ENCODE measurements at regions of chr15 and their contacts with region 1.

Region 1: GRCh38 chr15:79596051-79596507 is 163.9 kb downstream of the MINAR1 start:
- DNase-seq: peak; percentile 81
- H3K4me3 ChIP-seq: no peak overlapping the region
- H3K27ac ChIP-seq: no peak overlapping the region
- H3K4me1 ChIP-seq: no peaks in the 10 kb centered on the region
- H3K27me3 ChIP-seq: peaks cover 3% of the 10 kb centered on the region
- CTCF ChIP-seq: peak; percentile 99

Region 2: GRCh38 chr15:79339564-79340314 is 256.3 kb before region 1 on chr15:
- CTCF ChIA-PET with region 1: interaction called, 12 read pairs
- dilution Hi-C with region 1: no loop called
- in situ Hi-C with region 1: loop called in 1 of 2 experiments (anchors 25 kb)
- intact Hi-C with region 1: loop called (anchors 1 kb)
- DNase-seq: peak; percentile 8
- H3K4me3 ChIP-seq: no peak overlapping the region
- H3K27ac ChIP-seq: no peak overlapping the region
- H3K4me1 ChIP-seq: no peaks in the 10 kb centered on the region
- H3K27me3 ChIP-seq: no peaks in the 10 kb centered on the region
- CTCF ChIP-seq: peak; percentile 92 to 95

Region 3: GRCh38 chr15:79450648-79451047 is 145.4 kb before region 1 on chr15:
- CTCF ChIA-PET with region 1: no interaction called
- dilution Hi-C with region 1: no loop called
- in situ Hi-C with region 1: no loop called
- intact Hi-C with region 1: loop called (anchors 1 kb)
- DNase-seq: no peak
- H3K4me3 ChIP-seq: no peak overlapping the region
- H3K27ac ChIP-seq: no peak overlapping the region
- H3K4me1 ChIP-seq: no peaks in the 10 kb centered on the region
- H3K27me3 ChIP-seq: no peaks in the 10 kb centered on the region
- CTCF ChIP-seq: peak in 1 of 2 donors; percentile 10

Region 4: DNA sequence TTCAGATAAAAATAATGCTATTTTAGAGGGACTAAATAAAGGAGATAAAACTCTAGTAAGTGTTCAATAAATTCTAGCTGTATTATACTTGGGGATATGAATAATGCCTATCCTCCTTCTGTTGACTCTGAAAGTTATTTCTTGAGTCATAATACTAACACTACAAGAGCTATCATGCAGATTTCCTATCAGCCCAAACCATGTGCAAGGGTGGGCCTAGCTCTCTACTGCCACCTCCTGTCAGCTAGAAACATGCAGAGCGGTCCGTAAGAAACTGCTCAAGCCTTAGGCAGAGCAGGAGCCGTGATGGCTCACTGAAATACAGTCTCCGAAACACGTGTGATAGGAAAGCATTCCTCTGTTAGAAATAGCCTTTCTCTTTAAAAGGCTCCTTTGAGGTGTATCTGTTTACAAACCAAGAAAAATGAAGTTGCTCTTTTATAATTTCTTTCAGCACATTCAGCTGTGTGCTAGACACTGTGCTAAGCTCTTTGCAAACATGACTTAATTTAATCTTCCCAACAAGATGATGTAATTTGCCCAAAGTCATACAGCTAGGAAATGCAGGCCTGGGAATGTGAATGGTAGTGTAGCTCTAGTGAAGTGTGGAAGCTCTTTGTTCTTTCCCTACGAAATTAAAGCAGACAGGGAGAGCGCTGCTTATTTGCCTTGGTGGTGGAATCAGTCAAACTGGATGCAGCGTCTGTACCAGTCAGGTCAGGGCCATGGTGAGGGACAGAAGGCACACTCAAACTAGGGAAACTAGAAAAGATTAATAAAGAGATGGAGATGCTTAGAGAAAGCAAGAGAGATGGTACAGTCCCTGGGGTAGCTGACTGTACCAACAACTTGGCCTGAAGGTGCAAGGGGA is 257.6 kb after region 1 on chr15:
- CTCF ChIA-PET with region 1: interaction called, 8 read pairs
- dilution Hi-C with region 1: no loop called
- in situ Hi-C with region 1: no loop called
- intact Hi-C with region 1: loop called (anchors 5 kb)
- DNase-seq: peak; percentile 81
- H3K4me3 ChIP-seq: no peak overlapping the region
- H3K27ac ChIP-seq: no peak overlapping the region
- H3K4me1 ChIP-seq: peaks cover 13% of the 10 kb centered on the region
- H3K27me3 ChIP-seq: no peaks in the 10 kb centered on the region
- CTCF ChIP-seq: peak; percentile 99 to 100

Region 5: GRCh38 chr15:80309769-80310384 is 713.8 kb after region 1 on chr15:
- CTCF ChIA-PET with region 1: no interaction called
- dilution Hi-C with region 1: no loop called
- in situ Hi-C with region 1: no loop called
- intact Hi-C with region 1: loop called (anchors 10 kb)
- DNase-seq: peak; percentile 6
- H3K4me3 ChIP-seq: no peak overlapping the region
- H3K27ac ChIP-seq: no peak overlapping the region
- H3K4me1 ChIP-seq: no peaks in the 10 kb centered on the region
- H3K27me3 ChIP-seq: no peaks in the 10 kb centered on the region
- CTCF ChIP-seq: peak; percentile 53 to 73